Activated CD4-positive, alpha-beta memory T cell treated with anti-CD3 and anti-CD28 coated beads, Interleukin-2, amount 10 ng/mL, durations not matched to agents 7 days and 5 days (primary cell): ENCODE measurements at regions of chr3 and their contacts with region 1.

Region 1: GRCh38 chr3:182967218-182968204 is 12.8 kb downstream of the DCUN1D1 start:
- DNase-seq: peak; percentile 42
- H3K4me3 Mint-ChIP-seq: peak overlapping the region; percentile 31
- H3K27ac Mint-ChIP-seq: peak overlapping the region; percentile 77
- H3K4me1 Mint-ChIP-seq: peaks cover 60% of the 10 kb centered on the region
- H3K27me3 Mint-ChIP-seq: no peaks in the 10 kb centered on the region

Region 2: GRCh38 chr3:182980204-182981037 is 12.9 kb after region 1 on chr3 and contains the start of gene DCUN1D1:
- CTCF ChIA-PET with region 1: no interaction called
- POLR2A ChIA-PET with region 1: interaction called, 11 read pairs
- DNase-seq: peak; percentile 89
- H3K4me3 Mint-ChIP-seq: peak within 1 kb of the TSS; percentile 93
- H3K27ac Mint-ChIP-seq: peak within 1 kb of the TSS; percentile 81
- H3K4me1 Mint-ChIP-seq: peaks cover 29% of the 10 kb centered on the region
- H3K27me3 Mint-ChIP-seq: no peaks in the 10 kb centered on the region
- total RNA-seq, gene DCUN1D1: 60.2 to 63.1 TPM

Region 3: DNA sequence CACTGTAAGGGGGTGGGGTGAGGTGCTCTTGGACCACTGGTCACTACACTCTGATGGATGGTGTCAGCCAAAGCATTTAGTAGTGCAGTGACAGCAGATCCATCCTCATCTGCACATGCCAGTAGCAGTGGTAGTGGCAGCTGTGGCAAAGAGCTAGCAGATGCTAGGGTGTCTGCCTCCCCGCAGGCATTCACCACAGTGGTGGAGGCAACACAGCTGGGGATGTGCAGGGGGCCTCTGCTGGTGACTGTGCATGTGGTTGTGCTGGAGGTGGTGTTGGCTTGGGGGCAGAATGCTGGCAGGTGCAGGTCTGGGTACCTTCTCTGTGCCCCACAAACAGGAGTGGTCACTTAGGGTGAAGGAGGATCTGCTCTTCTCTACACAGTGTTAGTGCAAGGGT is 32.3 kb after region 1 on chr3:
- CTCF ChIA-PET with region 1: no interaction called
- POLR2A ChIA-PET with region 1: no interaction called
- DNase-seq: no peak
- H3K4me3 Mint-ChIP-seq: no peak overlapping the region
- H3K27ac Mint-ChIP-seq: no peak overlapping the region
- H3K4me1 Mint-ChIP-seq: no peaks in the 10 kb centered on the region
- H3K27me3 Mint-ChIP-seq: peaks cover 8% of the 10 kb centered on the region

Region 4: DNA sequence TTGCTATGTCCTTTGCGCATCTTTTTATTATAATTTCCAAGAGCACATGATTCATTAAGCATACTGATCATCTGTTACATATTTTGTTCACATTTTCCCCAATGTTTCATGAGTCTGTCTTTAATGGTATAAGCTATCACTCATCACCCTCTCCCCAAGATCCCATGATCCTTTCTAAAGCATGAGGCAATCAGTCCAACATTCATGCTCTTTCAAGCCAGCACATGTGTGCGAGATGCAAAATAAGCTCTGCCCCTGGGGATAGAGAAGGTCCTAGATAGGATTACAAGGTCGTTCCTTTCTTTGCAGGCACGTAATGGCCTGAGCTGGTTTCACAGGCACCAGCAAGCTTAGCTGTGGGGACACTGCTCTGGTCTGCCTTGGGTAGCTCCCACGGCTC is 253.3 kb after region 1 on chr3:
- CTCF ChIA-PET with region 1: no interaction called
- POLR2A ChIA-PET with region 1: no interaction called
- DNase-seq: no peak
- H3K4me3 Mint-ChIP-seq: no peak overlapping the region
- H3K27ac Mint-ChIP-seq: no peak overlapping the region
- H3K4me1 Mint-ChIP-seq: peaks cover 24% of the 10 kb centered on the region
- H3K27me3 Mint-ChIP-seq: no peaks in the 10 kb centered on the region